ENCODE measurements at regions of chr3 and their contacts with region 1.

Region 1: DNA sequence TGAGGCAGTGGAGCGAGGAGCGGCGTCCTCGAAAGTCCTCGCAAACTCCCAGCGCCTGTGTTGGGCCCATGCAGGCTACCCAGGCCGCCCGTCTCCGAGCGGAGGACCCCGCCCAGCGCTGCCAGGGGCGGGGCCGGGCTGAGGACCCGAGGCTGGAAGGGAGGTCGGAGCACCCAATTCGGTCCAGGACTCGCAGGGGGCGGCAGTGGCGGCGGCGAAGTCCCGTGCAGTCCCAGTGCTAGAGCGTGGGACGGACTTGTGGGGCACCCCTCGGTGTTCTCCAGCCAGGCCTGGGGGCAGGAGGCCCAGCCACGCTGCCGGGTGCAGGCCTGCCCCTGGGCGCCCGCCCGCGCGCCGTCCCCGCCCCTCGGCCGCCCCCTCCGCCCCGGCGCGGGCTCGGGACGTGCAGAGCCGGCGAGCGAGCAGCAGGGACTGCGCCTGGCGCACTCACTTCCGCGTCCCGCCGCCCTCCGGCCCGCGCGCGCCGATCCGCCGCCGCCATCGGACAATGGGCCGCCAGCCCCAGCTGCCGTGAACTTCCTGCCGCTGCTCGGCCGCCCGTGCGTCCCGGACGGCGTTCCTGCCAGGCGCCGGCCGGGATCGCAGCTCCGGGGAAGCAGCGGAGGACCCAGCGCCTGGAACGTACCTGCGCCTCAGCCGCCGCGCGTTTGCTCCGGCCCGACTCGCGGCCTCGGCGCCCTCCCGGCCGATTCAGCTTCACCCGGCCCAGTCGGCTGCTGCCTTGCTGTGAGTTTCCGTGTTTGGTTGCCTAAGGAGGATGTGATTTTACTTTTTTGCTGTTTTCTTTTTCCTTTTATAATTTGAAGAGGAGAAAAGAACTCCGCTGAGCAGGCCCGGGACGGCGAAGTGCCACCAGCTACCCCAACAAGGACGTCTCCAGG is 592 bp upstream of the LIMD1 start:
- DNase-seq: peak; percentile 90
- ATAC-seq: peak; percentile 83

Region 2: DNA sequence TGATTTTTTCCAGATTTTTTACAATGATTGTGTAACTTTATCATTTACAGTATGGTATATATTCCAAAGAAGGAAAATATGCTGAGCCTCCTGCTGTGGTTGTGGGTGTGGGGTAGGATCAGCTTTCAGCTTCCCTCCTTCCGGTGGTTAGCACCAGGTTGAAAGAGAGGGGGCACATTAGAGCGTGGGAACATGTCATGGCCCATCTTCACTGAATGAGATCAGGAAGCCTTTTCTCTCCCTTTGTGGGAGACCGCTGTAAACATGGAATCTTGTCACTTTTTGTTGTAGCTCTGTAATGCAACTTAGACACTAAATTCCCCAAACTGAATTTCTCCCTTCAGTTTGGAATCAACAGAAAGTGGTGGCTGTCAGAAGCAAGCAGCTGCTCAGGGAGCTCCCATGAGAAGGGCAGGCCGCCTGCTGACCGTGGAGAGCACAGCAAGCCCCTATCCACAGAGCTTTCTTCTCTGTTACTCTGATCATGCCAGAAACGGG is 86.1 kb before region 1 on chr3:
- intact Hi-C with region 1: loop called (anchors 2 kb)
- DNase-seq: no peak
- ATAC-seq: peak; percentile 88

Region 3: DNA sequence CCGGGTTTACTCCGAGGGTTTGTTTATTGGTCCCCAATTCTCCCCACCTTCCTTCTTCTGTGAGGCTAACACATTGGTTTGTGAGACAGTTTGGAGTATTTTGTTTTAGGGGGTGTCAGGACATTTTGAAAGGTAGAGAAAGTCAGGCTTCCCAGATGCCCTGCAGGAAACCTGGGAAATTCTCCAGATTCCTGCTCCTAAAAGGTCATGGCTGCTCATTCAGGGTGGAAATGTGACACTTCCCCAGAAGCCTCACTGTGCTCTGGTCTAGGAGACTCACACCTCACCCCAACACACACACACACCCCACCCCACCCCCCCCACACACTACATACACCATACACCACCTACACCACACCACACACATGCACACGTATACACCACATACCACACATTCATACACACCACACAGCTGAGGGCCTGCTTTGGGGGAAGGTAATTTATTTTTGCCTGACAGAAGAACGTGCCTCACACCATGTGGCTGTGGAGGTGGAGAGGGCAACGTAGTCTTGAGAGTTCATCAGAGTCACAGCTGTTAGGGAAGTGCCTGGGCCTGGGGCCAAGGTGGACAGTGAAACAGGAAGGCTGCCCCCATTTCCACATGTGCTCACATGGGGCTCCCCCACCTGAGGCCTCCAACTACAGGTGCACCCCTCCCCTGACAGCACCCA is 39.8 kb before region 1 on chr3:
- intact Hi-C with region 1: loop called (anchors 5 kb)
- DNase-seq: peak; percentile 87
- ATAC-seq: peak; percentile 33

Region 4: DNA sequence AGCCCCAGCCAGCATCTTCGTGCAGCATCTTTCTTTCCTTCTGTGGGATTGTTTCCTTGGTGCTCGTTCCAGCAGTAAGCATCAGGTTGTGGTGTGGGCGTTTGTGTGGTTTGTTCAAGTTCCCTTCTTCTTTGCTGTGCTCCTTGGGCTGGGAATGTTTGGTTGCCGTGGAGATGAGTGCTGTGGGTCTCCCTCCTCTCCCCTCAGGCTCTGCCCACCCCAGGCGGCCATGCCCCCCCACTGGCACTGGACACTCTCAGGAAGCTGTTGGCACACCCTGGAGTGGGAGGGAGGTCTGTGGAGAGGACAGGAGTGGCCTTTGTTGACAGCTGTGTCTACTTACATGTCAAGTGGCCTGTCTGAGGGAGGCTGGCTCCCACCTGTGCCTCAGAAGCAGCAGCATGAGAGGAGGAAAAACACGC is 48.8 kb after region 1 on chr3:
- intact Hi-C with region 1: no loop called
- DNase-seq: no peak
- ATAC-seq: peak; percentile 40

Region 5: DNA sequence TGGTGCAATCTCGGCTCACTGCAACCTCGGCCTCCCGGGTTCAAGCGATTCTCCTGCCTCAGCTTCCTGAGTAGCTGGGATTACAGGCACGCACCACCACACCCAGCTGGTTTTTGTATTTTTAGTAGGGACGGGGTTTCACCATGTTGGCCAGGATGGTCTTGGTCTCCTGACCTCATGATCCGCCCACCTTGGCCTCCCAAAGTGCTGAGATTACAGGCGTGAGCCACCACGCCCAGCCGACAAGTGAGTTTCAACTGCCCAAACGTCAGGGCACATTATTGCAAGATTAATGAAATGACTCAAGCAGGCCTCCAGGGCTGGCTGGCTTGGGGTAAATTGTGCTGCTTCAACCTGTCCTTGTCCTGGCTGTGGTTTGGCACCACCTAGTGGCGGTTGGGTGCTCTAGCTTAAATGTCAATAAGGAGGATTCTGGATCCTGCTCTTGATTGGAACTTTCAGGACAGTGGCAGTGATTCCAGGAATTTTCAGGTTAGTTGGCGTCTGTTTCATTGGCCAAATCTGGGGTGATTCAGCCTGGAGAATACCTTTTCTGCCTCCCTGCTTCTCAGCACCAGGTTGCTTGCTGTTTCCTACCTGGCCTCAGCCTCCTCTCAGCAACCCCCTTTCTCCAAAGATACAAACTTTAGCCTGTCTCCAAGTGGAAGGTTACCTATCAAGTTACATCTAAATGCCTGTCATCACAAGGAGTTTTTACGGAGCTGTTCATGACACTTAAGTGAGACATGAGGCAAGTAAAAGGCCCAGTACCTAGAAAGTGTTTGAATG is 62.8 kb after region 1 on chr3:
- intact Hi-C with region 1: loop called (anchors 2 kb)
- DNase-seq: peak; percentile 95
- ATAC-seq: peak; percentile 88

Region 6: GRCh38 chr3:45776611-45777010 is 182.7 kb after region 1 on chr3:
- intact Hi-C with region 1: no loop called
- DNase-seq: no peak
- ATAC-seq: no peak

Region 7: GRCh38 chr3:46154311-46154710 is 560.4 kb after region 1 on chr3:
- intact Hi-C with region 1: no loop called
- DNase-seq: no peak
- ATAC-seq: no peak

Measured in Right ventricle myocardium inferior (tissue), 1 donor.